T-cell (primary cell): ENCODE measurements at regions of chr6 and their contacts with region 1.

Region 1: GRCh38 chr6:13355043-13355951 is 27.0 kb upstream of the TBC1D7 start:
- DNase-seq: peak in 5 of 35 experiments; percentile 6 to 59 (median 12)
- ATAC-seq: peak; percentile 56 to 78 (median 61)
- H3K4me3 ChIP-seq: peak overlapping the region; percentile 36 to 42
- H3K4me3 Mint-ChIP-seq: peak overlapping the region; percentile 67 to 83 (median 75)
- H3K27ac ChIP-seq: peak overlapping the region; percentile 81
- H3K27ac Mint-ChIP-seq: peak overlapping the region; percentile 88 to 91
- H3K4me1 ChIP-seq: peaks cover 29 to 30% of the 10 kb centered on the region in 2 experiments
- H3K4me1 Mint-ChIP-seq: peaks cover 34 to 48% (median 47%) of the 10 kb centered on the region in 3 donors
- H3K27me3 ChIP-seq: no peaks in the 10 kb centered on the region
- H3K27me3 Mint-ChIP-seq: no peaks in the 10 kb centered on the region

Region 2: DNA sequence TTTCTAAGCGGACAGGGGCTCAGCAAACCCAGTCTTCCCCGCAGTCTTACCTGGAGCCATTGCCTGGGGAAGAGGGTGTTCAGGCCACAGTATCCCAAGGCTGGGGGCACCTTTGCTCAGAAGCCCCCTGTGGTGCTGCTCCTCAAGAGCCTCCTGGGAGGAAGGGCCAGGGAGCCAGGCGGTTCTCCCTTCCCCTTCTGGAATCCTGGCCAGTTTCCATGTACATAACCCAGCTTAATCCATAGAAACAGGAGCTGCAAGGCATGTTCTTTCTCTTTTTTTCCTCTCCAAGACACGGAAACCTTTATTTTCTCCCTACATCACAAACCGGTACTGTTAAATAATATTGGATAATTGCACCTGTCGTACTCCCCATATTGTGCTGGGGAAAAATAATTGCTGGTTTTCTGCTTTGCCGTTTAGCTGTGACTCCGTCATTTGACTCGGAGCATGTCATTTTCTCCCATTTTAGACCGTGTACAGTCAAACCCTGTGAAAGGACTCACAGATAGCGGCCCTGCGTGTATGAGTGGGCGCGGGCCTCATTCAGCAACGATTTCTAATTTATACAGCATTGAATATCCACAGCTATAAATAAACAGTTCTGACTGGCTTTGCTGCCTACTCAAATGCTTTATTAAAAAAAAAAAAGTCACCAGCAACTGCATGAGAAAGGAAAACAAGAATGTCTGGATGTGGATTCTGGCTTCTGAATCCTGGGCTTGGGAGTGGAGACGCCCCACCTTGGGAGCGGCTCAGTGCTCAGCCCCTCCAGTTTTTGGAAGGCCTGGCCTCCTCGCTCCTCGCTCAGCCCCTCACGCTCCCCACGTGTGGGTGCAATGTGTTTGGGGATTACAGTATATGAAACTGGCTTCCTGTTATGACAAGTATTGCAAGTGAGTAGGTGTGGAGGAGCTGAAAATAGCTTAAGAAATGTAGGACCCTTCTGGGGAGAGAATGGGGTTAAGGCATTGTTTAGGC is 1644.0 kb before region 1 on chr6:
- CTCF ChIA-PET with region 1: no interaction called
- POLR2A ChIA-PET with region 1: interaction called in 1 of 2 experiments, 10 read pairs
- DNase-seq: peak in 15 of 35 experiments; percentile 9 to 58 (median 30)
- ATAC-seq: peak; percentile 31 to 57 (median 50)
- H3K4me3 ChIP-seq: no peak overlapping the region
- H3K4me3 Mint-ChIP-seq: peak overlapping the region in 2 of 3 donors; percentile 28 to 78
- H3K27ac ChIP-seq: peak overlapping the region; percentile 73
- H3K27ac Mint-ChIP-seq: peak overlapping the region; percentile 95 to 99
- H3K4me1 ChIP-seq: peaks cover 51 to 56% of the 10 kb centered on the region in 2 experiments
- H3K4me1 Mint-ChIP-seq: peaks cover 72 to 87% (median 80%) of the 10 kb centered on the region in 3 donors
- H3K27me3 ChIP-seq: no peaks in the 10 kb centered on the region
- H3K27me3 Mint-ChIP-seq: no peaks in the 10 kb centered on the region

Region 3: GRCh38 chr6:12941422-12941821 is 413.9 kb before region 1 on chr6:
- CTCF ChIA-PET with region 1: no interaction called
- POLR2A ChIA-PET with region 1: no interaction called
- DNase-seq: no peak
- ATAC-seq: no peak
- H3K4me3 ChIP-seq: no peak overlapping the region
- H3K4me3 Mint-ChIP-seq: no peak overlapping the region
- H3K27ac ChIP-seq: no peak overlapping the region
- H3K27ac Mint-ChIP-seq: no peak overlapping the region
- H3K4me1 ChIP-seq: peaks cover 0 to 2% of the 10 kb centered on the region in 2 experiments
- H3K4me1 Mint-ChIP-seq: peaks cover 2 to 8% (median 2%) of the 10 kb centered on the region in 3 donors
- H3K27me3 ChIP-seq: no peaks in the 10 kb centered on the region
- H3K27me3 Mint-ChIP-seq: peaks cover 10 to 12% of the 10 kb centered on the region in 2 donors

Region 4: DNA sequence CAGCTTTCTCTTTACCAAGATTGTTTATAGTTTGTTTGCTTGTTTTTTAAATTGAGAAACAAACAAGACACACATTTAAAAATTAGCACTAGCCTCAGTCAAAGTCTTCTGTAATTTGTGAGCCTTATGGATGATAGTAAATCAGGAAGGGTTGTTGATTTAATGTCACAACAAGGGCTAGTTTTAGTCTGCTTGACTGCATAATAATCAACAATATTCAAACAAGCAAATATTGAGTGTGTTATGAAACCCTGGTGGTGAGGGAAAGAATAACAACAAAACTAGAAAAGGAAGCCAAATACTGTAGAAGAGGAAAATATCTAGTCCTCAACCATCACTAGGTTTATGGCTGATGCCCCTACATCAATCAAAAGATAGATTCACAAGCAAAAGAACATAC is 255.5 kb before region 1 on chr6:
- CTCF ChIA-PET with region 1: no interaction called
- POLR2A ChIA-PET with region 1: no interaction called
- DNase-seq: no peak
- ATAC-seq: no peak
- H3K4me3 ChIP-seq: no peak overlapping the region
- H3K4me3 Mint-ChIP-seq: no peak overlapping the region
- H3K27ac ChIP-seq: no peak overlapping the region
- H3K27ac Mint-ChIP-seq: no peak overlapping the region
- H3K4me1 ChIP-seq: no peaks in the 10 kb centered on the region
- H3K4me1 Mint-ChIP-seq: no peaks in the 10 kb centered on the region
- H3K27me3 ChIP-seq: peaks cover 0 to 3% of the 10 kb centered on the region in 2 experiments
- H3K27me3 Mint-ChIP-seq: peaks cover 0 to 14% of the 10 kb centered on the region in 2 donors

Region 5: GRCh38 chr6:13328076-13328874 is 27.0 kb before region 1 on chr6 and contains the start of gene TBC1D7:
- CTCF ChIA-PET with region 1: interaction called, 6 to 13 read pairs
- POLR2A ChIA-PET with region 1: no interaction called
- DNase-seq: peak; percentile 82 to 97 (median 90)
- ATAC-seq: peak; percentile 90 to 92 (median 92)
- H3K4me3 ChIP-seq: peak within 1 kb of the TSS; percentile 85 to 98
- H3K4me3 Mint-ChIP-seq: peak within 1 kb of the TSS; percentile 86 to 93 (median 92)
- H3K27ac ChIP-seq: peak within 1 kb of the TSS; percentile 94
- H3K27ac Mint-ChIP-seq: peak within 1 kb of the TSS; percentile 96 to 99
- H3K4me1 ChIP-seq: peaks cover 7 to 9% of the 10 kb centered on the region in 2 experiments
- H3K4me1 Mint-ChIP-seq: peaks cover 20 to 33% (median 29%) of the 10 kb centered on the region in 3 donors
- H3K27me3 ChIP-seq: no peaks in the 10 kb centered on the region
- H3K27me3 Mint-ChIP-seq: no peaks in the 10 kb centered on the region
- total RNA-seq, gene TBC1D7: 12.7 to 16.2 (median 14.6) TPM

Region 6: GRCh38 chr6:13604546-13605416 is 249.5 kb after region 1 on chr6:
- CTCF ChIA-PET with region 1: no interaction called
- POLR2A ChIA-PET with region 1: interaction called in 1 of 2 experiments, 15 read pairs
- DNase-seq: no peak
- ATAC-seq: no peak
- H3K4me3 ChIP-seq: no peak overlapping the region
- H3K4me3 Mint-ChIP-seq: no peak overlapping the region
- H3K27ac ChIP-seq: no peak overlapping the region
- H3K27ac Mint-ChIP-seq: no peak overlapping the region
- H3K4me1 ChIP-seq: no peaks in the 10 kb centered on the region
- H3K4me1 Mint-ChIP-seq: no peaks in the 10 kb centered on the region
- H3K27me3 ChIP-seq: no peaks in the 10 kb centered on the region
- H3K27me3 Mint-ChIP-seq: no peaks in the 10 kb centered on the region